Naive thymus-derived CD4-positive, alpha-beta T cell (primary cell): ENCODE measurements at regions of chr7 and their contacts with region 1.

Region 1: GRCh38 chr7:127651556-127652332 is at the start of gene SND1:
- DNase-seq: peak; percentile 92 to 100 (median 98)
- ATAC-seq: peak; percentile 96
- H3K4me3 ChIP-seq: peak within 1 kb of the TSS; percentile 96
- H3K4me3 Mint-ChIP-seq: peak within 1 kb of the TSS in 6 of 10 donors; percentile 98 to 99 (median 98)
- H3K27ac ChIP-seq: peak within 1 kb of the TSS; percentile 86
- H3K27ac Mint-ChIP-seq: peak within 1 kb of the TSS in 5 of 9 donors; percentile 94 to 99 (median 98)
- H3K4me1 ChIP-seq: peaks cover 22 to 26% of the 10 kb centered on the region in 2 donors
- H3K4me1 Mint-ChIP-seq: peaks cover 5 to 55% (median 43%) of the 10 kb centered on the region in 7 donors
- H3K27me3 ChIP-seq: no peaks in the 10 kb centered on the region
- H3K27me3 Mint-ChIP-seq: peaks cover 0 to 4% (median 0%) of the 10 kb centered on the region in 5 donors
- total RNA-seq, gene SND1: 132 to 253 (median 163) TPM

Region 2: DNA sequence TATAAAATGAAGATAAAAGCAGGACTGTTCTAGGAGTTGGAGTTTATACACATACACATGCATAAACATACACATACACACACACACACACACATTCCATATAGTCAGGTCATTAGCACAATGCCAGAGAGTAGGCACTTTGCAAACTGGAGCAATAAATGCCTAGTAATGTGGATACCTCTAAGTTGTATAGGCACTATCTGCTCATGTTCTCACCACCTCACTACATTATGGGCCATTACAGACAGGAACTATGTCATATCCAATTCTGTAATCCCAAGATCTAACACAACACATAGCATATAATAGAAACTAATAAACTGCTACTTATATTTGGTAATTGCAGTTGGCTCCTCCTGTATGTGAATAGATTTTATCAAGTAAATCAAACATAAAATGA is 514.6 kb before region 1 on chr7:
- CTCF ChIA-PET with region 1: no interaction called
- POLR2A ChIA-PET with region 1: no interaction called
- intact Hi-C with region 1: no loop called
- DNase-seq: no peak
- ATAC-seq: no peak
- H3K4me3 ChIP-seq: no peak overlapping the region
- H3K4me3 Mint-ChIP-seq: no peak overlapping the region
- H3K27ac ChIP-seq: no peak overlapping the region
- H3K27ac Mint-ChIP-seq: no peak overlapping the region
- H3K4me1 ChIP-seq: no peaks in the 10 kb centered on the region
- H3K4me1 Mint-ChIP-seq: no peaks in the 10 kb centered on the region
- H3K27me3 ChIP-seq: no peaks in the 10 kb centered on the region
- H3K27me3 Mint-ChIP-seq: peaks cover 3 to 34% (median 10%) of the 10 kb centered on the region in 5 donors

Region 3: GRCh38 chr7:127359011-127359410 is 292.7 kb before region 1 on chr7:
- CTCF ChIA-PET with region 1: no interaction called
- POLR2A ChIA-PET with region 1: no interaction called
- intact Hi-C with region 1: loop called in 1 of 2 experiments (anchors 10 kb)
- DNase-seq: no peak
- ATAC-seq: no peak
- H3K4me3 ChIP-seq: no peak overlapping the region
- H3K4me3 Mint-ChIP-seq: no peak overlapping the region
- H3K27ac ChIP-seq: no peak overlapping the region
- H3K27ac Mint-ChIP-seq: peak overlapping the region in 4 of 9 donors; percentile 9 to 53 (median 52)
- H3K4me1 ChIP-seq: no peaks in the 10 kb centered on the region
- H3K4me1 Mint-ChIP-seq: peaks cover 0 to 36% (median 22%) of the 10 kb centered on the region in 7 donors
- H3K27me3 ChIP-seq: no peaks in the 10 kb centered on the region
- H3K27me3 Mint-ChIP-seq: no peaks in the 10 kb centered on the region

Region 4: DNA sequence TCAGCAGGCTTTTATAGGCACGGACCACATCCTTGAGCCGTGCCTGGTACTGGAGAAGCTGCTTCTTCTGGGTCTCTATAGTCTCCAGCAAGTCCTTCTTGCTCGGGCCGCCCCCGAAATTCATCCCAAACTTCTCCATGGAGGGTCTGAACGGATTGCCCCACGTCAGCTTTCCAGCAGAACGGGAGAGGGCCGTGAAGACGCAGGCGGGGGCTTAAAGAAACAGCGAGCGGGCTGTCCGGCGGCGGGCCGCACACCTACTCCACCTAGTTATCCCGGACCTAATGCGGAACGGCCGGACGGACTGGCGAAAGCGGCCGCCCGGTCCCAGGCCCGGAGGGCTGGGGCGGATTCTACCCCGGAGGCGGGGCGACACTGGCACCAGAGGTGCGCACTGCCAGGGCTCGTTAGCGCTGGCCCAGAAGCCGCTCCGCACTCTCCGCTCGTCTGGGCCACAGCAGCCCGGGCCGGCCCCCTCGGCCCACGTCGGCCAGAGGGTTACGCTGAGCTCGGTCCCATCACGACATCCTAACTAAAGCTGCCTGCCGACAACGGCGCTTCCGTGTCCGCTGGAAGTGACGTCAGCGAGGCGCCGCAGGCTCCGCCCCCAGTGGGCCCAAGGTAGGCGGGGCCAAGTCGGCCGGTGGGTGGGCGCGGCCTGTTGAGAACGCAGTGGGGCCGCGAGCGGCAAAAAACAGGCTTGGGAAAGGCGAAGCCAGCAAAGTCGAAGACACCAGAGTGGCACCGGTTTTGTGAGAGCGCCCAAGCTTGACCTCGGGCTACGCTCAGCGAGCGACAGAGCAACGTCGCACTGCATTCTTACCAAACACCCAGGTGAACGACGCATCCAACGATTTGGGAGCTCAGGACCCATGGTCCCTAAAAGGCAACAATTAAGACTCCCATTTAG is 66.4 kb before region 1 on chr7 and contains the start of gene GCC1:
- CTCF ChIA-PET with region 1: no interaction called
- POLR2A ChIA-PET with region 1: interaction called, 40 read pairs
- intact Hi-C with region 1: loop called (anchors 1 kb)
- DNase-seq: peak; percentile 87 to 98 (median 93)
- ATAC-seq: peak; percentile 87
- H3K4me3 ChIP-seq: peak within 1 kb of the TSS; percentile 87
- H3K4me3 Mint-ChIP-seq: peak within 1 kb of the TSS; percentile 86 to 98 (median 92)
- H3K27ac ChIP-seq: peak within 1 kb of the TSS; percentile 88
- H3K27ac Mint-ChIP-seq: peak within 1 kb of the TSS; percentile 77 to 97 (median 94)
- H3K4me1 ChIP-seq: peaks cover 47 to 55% of the 10 kb centered on the region in 2 donors
- H3K4me1 Mint-ChIP-seq: peaks cover 55 to 88% (median 78%) of the 10 kb centered on the region in 7 donors
- H3K27me3 ChIP-seq: no peaks in the 10 kb centered on the region
- H3K27me3 Mint-ChIP-seq: no peaks in the 10 kb centered on the region
- total RNA-seq, gene GCC1: 19.6 to 31.3 (median 23.7) TPM

Region 5: DNA sequence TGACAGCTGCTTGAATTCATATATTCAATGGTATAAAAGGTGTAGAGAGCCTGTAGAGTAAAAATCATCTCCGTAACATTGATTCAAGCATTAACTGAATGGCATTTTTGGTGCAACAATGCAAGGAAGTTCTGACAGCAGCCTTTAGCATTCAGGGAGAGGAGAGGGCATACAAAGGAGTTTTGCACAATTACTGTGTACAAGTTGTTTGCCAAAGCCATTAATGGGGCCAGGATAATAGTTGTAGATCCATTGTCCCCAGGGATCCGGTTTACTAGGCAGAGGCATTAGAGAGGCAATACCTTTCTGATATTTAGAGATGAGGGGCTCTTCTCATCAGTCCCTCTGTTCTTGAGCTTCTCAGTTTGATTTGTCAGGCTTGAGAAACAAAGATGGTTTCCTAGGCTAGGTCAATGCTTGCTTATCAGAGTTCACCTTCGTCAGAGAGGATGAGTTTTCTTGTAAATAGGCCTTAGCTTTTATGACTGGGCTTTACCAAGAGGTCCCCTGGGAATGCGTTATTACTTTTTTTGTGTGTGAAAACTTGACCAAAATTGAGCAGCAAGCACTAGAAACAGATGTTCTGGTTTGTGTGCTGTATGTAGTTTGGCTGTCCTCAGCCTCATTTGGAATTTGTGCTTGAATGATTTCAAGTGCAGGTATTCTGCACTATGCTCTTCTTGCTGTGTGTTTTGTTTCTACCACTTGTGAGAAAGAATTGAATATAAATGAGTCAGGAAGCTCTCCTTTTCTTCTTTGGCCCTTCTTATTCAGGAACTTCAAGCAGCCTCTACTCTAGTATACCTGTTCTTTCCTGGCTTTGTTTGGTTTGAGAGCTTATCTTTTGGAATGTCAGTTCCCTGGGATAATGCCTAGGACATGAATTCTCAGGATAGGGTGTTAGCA is 32.3 kb after region 1 on chr7:
- CTCF ChIA-PET with region 1: no interaction called
- POLR2A ChIA-PET with region 1: no interaction called
- intact Hi-C with region 1: no loop called
- DNase-seq: no peak
- ATAC-seq: no peak
- H3K4me3 ChIP-seq: no peak overlapping the region
- H3K4me3 Mint-ChIP-seq: no peak overlapping the region
- H3K27ac ChIP-seq: no peak overlapping the region
- H3K27ac Mint-ChIP-seq: peak overlapping the region in 2 of 9 donors; percentile 26 to 56
- H3K4me1 ChIP-seq: peaks cover 0 to 4% of the 10 kb centered on the region in 2 donors
- H3K4me1 Mint-ChIP-seq: peaks cover 23 to 47% (median 41%) of the 10 kb centered on the region in 7 donors
- H3K27me3 ChIP-seq: no peaks in the 10 kb centered on the region
- H3K27me3 Mint-ChIP-seq: no peaks in the 10 kb centered on the region

Region 6: DNA sequence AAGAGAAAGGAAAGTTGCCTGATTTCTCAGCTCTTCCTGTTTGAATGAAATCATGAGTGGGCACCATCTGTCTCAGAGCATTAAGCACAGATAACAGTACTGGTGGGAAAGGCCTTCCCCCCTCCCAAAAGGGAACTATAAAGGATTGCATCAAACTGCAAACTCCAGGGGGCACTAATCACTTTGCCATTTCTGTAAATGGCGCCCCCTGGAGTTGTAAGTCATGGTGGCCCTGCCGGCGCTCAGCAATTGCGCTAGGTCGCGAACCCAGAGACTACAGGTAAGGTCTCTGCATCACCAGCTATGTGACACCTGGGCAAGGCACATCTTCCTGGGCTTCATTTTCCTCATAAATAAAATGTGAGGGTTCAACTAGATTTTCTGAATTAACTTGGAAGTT is 368.4 kb after region 1 on chr7:
- CTCF ChIA-PET with region 1: no interaction called
- POLR2A ChIA-PET with region 1: no interaction called
- intact Hi-C with region 1: no loop called
- DNase-seq: peak in 1 of 9 donors; percentile 9
- ATAC-seq: no peak
- H3K4me3 ChIP-seq: no peak overlapping the region
- H3K4me3 Mint-ChIP-seq: no peak overlapping the region
- H3K27ac ChIP-seq: no peak overlapping the region
- H3K27ac Mint-ChIP-seq: peak overlapping the region in 1 of 9 donors; percentile 3
- H3K4me1 ChIP-seq: no peaks in the 10 kb centered on the region
- H3K4me1 Mint-ChIP-seq: peaks cover 0 to 14% (median 4%) of the 10 kb centered on the region in 7 donors
- H3K27me3 ChIP-seq: no peaks in the 10 kb centered on the region
- H3K27me3 Mint-ChIP-seq: no peaks in the 10 kb centered on the region

Region 7: DNA sequence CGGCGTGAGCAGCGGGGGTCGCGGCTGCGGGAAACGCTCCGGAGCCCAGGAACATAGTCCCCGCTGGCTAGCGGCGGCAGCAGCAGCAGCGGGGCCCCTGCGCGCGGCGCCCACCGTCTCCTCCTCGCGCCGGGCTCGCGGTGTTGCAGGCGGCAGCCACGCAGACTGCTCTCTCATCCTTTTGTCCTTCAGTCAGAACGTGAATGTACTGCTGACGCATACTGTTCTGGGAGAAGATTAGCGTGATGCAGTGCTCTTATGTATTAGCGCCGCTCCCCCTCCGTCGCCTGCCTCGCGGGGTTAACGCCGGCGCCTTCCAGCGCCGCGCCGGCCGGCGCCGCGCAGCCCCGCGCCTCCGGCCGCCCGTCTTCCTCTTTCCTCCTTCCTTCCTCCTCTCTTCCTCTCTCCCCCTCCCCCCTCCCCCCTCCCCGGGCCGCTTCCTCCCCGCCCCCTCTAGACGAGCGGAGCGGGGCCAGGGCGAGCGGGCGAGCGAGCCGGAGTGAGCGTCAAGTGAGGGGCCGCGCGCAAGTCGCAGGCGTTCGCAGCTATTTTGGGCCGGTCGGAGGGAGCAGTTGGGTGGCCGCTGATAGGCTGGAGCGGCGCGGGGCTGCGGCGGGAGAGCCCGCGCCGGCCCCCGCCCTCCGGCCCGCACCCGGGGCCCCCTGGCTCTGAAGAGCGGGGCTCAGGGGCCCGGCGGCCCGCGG is 380.3 kb after region 1 on chr7:
- CTCF ChIA-PET with region 1: no interaction called
- POLR2A ChIA-PET with region 1: no interaction called
- intact Hi-C with region 1: loop called in 1 of 2 experiments (anchors 5 kb)
- DNase-seq: peak; percentile 29 to 63 (median 53)
- ATAC-seq: peak; percentile 92
- H3K4me3 ChIP-seq: peak overlapping the region; percentile 61
- H3K4me3 Mint-ChIP-seq: peak overlapping the region; percentile 84 to 97 (median 92)
- H3K27ac ChIP-seq: no peak overlapping the region
- H3K27ac Mint-ChIP-seq: peak overlapping the region in 3 of 9 donors; percentile 74 to 76 (median 74)
- H3K4me1 ChIP-seq: no peaks in the 10 kb centered on the region
- H3K4me1 Mint-ChIP-seq: peaks cover 6 to 36% (median 23%) of the 10 kb centered on the region in 7 donors
- H3K27me3 ChIP-seq: no peaks in the 10 kb centered on the region
- H3K27me3 Mint-ChIP-seq: peaks cover 0 to 34% (median 7%) of the 10 kb centered on the region in 5 donors

Region 8: DNA sequence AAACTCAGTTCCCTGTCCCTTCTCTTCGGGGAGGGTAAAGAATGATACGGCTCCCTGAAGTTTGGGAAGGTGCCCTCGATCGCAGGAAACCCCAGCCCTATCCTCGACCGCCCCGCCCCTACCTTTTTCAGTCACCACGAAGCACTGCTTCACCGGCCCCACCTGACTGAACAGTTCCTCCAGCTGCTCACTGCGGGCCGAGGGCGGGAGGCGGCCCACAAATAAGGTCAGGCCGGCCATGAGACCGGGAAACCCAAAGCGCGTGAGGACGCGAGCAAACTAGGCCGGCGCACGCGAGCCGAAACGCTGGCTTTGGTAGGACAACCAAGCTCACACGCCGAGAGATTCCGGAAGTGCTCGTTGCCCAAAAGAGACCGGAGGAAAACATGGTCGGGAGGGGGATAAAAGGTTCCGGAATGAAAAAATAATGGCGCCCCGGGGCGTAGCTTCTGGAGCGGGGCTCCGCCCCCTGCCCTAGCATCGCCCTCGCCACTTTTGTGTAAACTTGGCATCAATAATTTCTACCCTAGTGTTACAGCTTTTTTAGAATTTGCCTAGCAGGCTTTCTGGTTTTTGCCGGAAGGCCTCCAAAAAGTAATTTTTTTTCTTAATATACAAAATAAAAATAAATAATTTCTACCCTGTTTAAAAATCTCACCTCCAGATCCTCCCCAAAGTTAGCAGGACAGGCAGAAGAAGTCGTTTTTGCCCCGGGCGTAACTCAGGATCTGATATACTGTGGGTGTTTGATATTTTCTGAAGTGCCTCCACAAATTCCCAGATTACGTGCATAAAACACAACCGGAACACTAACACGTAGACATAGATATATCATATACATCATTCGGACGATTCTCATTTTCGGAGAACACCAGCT is 692.0 kb after region 1 on chr7 and contains the start of gene RBM28:
- CTCF ChIA-PET with region 1: no interaction called
- POLR2A ChIA-PET with region 1: no interaction called
- intact Hi-C with region 1: loop called (anchors 1 kb)
- DNase-seq: peak; percentile 80 to 93 (median 90)
- ATAC-seq: peak; percentile 98
- H3K4me3 ChIP-seq: peak within 1 kb of the TSS; percentile 97
- H3K4me3 Mint-ChIP-seq: peak within 1 kb of the TSS; percentile 89 to 98 (median 96)
- H3K27ac ChIP-seq: peak within 1 kb of the TSS; percentile 83
- H3K27ac Mint-ChIP-seq: peak within 1 kb of the TSS; percentile 83 to 96 (median 93)
- H3K4me1 ChIP-seq: peaks cover 16 to 20% of the 10 kb centered on the region in 2 donors
- H3K4me1 Mint-ChIP-seq: peaks cover 19 to 44% (median 34%) of the 10 kb centered on the region in 7 donors
- H3K27me3 ChIP-seq: no peaks in the 10 kb centered on the region
- H3K27me3 Mint-ChIP-seq: peaks cover 0 to 15% (median 7%) of the 10 kb centered on the region in 5 donors
- total RNA-seq, gene RBM28: 30.1 to 51.0 (median 43.5) TPM

Region 9: GRCh38 chr7:128739048-128739962 is 1087.6 kb after region 1 on chr7 and contains the start of gene CALU:
- CTCF ChIA-PET with region 1: no interaction called
- POLR2A ChIA-PET with region 1: no interaction called
- intact Hi-C with region 1: loop called in 1 of 2 experiments (anchors 2 kb)
- DNase-seq: peak; percentile 87 to 95 (median 94)
- ATAC-seq: peak; percentile 98
- H3K4me3 ChIP-seq: peak within 1 kb of the TSS; percentile 86
- H3K4me3 Mint-ChIP-seq: peak within 1 kb of the TSS; percentile 89 to 100 (median 97)
- H3K27ac ChIP-seq: peak within 1 kb of the TSS; percentile 85
- H3K27ac Mint-ChIP-seq: peak within 1 kb of the TSS; percentile 96 to 99 (median 98)
- H3K4me1 ChIP-seq: peaks cover 13% of the 10 kb centered on the region in 2 donors
- H3K4me1 Mint-ChIP-seq: peaks cover 11 to 52% (median 45%) of the 10 kb centered on the region in 7 donors
- H3K27me3 ChIP-seq: no peaks in the 10 kb centered on the region
- H3K27me3 Mint-ChIP-seq: peaks cover 0 to 5% (median 0%) of the 10 kb centered on the region in 5 donors
- total RNA-seq, gene CALU: 18.6 to 36.2 (median 22.6) TPM

Region 10: DNA sequence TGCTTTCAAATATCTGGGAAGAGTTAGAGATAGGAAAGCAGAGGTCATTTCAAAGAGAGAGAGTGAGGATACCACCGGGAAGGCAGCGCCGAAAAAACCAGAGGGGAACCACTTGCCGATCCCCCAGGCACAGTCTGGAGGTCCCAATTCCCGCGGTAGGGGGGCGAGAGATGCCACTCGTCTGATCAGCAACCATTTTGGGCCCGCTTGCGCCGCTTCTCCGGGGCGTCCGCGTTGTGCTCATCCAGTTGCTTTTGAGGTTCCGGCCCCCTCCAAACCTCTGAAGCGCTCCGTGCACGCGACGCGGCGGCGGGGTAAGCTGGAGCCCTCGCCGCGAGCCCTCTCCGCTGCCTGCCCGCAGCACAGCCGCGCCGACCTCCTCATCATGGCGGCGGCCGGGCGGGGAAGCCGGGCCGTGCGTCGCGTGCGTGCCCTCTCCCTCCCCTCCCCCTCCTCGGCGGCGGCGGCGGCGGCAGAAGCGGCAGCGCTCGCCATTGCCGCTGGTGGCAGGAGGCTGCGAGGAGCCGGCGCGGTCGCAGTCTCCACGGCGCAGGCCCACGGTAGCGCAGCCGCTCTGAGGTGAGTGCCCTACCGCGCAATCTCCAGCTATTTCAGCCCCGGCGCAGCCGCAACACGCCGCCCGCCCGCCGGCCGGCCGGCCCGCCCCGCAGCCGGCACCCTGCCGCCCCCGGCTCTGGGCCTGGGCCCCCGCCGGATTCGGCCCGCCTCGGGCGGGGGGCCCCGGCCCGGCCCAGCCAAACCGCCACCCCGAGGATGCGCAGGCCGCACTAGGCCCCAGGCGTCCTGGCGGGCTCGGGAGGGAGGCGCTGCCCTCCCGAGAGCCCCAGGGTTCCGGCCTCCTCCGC is 1959.7 kb after region 1 on chr7 and contains the start of gene NRF1:
- CTCF ChIA-PET with region 1: no interaction called
- POLR2A ChIA-PET with region 1: no interaction called
- intact Hi-C with region 1: loop called in 1 of 2 experiments (anchors 5 kb)
- DNase-seq: peak; percentile 89 to 97 (median 94)
- ATAC-seq: peak; percentile 92
- H3K4me3 ChIP-seq: peak within 1 kb of the TSS; percentile 87
- H3K4me3 Mint-ChIP-seq: peak within 1 kb of the TSS; percentile 88 to 99 (median 96)
- H3K27ac ChIP-seq: peak within 1 kb of the TSS; percentile 82
- H3K27ac Mint-ChIP-seq: peak within 1 kb of the TSS; percentile 92 to 99 (median 96)
- H3K4me1 ChIP-seq: peaks cover 24 to 38% of the 10 kb centered on the region in 2 donors
- H3K4me1 Mint-ChIP-seq: peaks cover 37 to 79% (median 67%) of the 10 kb centered on the region in 7 donors
- H3K27me3 ChIP-seq: no peaks in the 10 kb centered on the region
- H3K27me3 Mint-ChIP-seq: no peaks in the 10 kb centered on the region
- total RNA-seq, gene NRF1: 25.8 to 49.3 (median 35.3) TPM